Naive thymus-derived CD4-positive, alpha-beta T cell (primary cell): ENCODE measurements at regions of chr4 and their contacts with region 1.

Region 1: DNA sequence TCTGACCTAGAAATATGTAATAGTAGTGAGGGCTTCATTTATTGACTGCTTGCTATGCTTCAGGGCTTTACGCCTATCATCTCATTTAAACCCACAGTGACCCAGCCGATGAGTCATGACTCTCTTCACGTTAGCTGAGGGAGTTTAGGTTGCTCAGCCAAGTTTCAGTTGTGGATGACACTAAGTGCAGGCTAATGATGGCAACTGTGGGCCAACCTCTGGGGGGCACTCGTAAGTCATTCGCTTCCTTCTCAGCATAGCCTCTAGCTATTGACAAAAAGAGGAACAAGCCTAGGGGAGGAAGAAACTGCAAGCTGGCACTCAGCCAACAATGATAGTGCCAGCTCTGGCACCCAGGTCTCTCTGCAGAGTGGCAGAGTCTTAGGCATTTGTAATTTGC is 325.0 kb downstream of the ARHGAP10 start:
- DNase-seq: peak in 6 of 9 donors; percentile 22 to 40 (median 28)
- ATAC-seq: peak; percentile 80
- H3K4me3 ChIP-seq: no peak overlapping the region
- H3K4me3 Mint-ChIP-seq: peak overlapping the region in 9 of 10 donors; percentile 10 to 64 (median 29)
- H3K27ac ChIP-seq: no peak overlapping the region
- H3K27ac Mint-ChIP-seq: peak overlapping the region; percentile 48 to 99 (median 84)
- H3K4me1 ChIP-seq: peaks cover 58 to 64% of the 10 kb centered on the region in 2 donors
- H3K4me1 Mint-ChIP-seq: peaks cover 59 to 98% (median 94%) of the 10 kb centered on the region in 7 donors
- H3K27me3 ChIP-seq: no peaks in the 10 kb centered on the region
- H3K27me3 Mint-ChIP-seq: no peaks in the 10 kb centered on the region

Region 2: GRCh38 chr4:146175541-146176453 is 1881.1 kb before region 1 on chr4 and contains the start of gene LSM6:
- CTCF ChIA-PET with region 1: no interaction called
- POLR2A ChIA-PET with region 1: no interaction called
- intact Hi-C with region 1: loop called in 1 of 2 experiments (anchors 5 kb)
- DNase-seq: peak; percentile 63 to 86 (median 84)
- ATAC-seq: peak; percentile 94
- H3K4me3 ChIP-seq: peak within 1 kb of the TSS; percentile 87
- H3K4me3 Mint-ChIP-seq: peak within 1 kb of the TSS; percentile 88 to 95 (median 92)
- H3K27ac ChIP-seq: peak within 1 kb of the TSS; percentile 94
- H3K27ac Mint-ChIP-seq: peak within 1 kb of the TSS; percentile 82 to 99 (median 97)
- H3K4me1 ChIP-seq: peaks cover 25 to 31% of the 10 kb centered on the region in 2 donors
- H3K4me1 Mint-ChIP-seq: peaks cover 29 to 66% (median 57%) of the 10 kb centered on the region in 7 donors
- H3K27me3 ChIP-seq: no peaks in the 10 kb centered on the region
- H3K27me3 Mint-ChIP-seq: no peaks in the 10 kb centered on the region
- total RNA-seq, gene LSM6: 24.7 to 49.7 (median 46.2) TPM

Region 3: DNA sequence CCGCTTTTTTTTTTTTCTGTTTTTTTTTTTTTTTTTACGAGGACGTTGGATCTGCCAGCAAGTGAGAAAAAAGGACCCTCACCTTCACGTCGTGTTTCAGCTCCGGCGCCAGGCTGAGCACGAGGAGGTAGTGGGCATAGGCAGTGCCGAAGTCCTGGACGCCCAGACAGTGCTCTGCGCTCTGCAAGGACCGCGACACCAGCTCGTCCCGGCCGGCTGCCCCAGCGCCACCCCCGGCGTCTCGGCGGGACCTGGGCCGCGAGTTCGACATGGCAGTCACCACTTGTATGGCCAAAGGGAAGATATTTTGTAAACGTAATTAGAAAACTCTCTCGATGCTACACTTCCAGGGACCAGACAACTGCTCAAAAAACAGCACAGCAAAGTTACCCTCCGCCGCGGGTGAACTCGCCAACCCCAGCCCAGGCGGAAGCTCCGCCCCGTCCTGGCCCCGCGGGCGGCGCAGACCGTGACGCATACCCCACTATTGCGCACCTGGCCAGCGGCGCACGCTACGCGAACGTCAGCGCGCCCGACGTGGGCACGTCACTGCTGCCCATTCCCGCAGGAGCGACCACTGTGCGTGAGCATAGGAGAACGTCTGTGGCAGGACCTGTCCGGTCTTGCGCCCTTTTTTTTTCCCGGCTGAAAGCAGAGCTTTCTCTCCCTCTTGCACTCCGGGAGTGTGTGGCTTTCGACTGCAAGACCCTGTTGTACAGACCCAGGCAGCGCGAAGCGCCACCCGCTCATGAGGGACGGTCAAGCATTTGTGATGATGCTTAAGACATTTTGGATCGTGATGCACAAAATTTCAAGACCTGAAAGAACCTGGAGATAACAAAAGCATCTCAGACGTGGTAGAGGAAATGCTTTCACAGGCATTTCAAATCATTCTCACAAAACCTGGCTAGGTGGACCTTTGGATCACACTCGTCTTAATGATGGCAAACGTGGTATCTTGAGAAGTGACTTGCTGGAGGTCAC is 372.9 kb before region 1 on chr4 and contains the start of gene PRMT9:
- CTCF ChIA-PET with region 1: no interaction called
- POLR2A ChIA-PET with region 1: no interaction called
- intact Hi-C with region 1: loop called in 1 of 2 experiments (anchors 5 kb)
- DNase-seq: peak; percentile 79 to 90 (median 85)
- ATAC-seq: peak; percentile 98
- H3K4me3 ChIP-seq: peak within 1 kb of the TSS; percentile 97
- H3K4me3 Mint-ChIP-seq: peak within 1 kb of the TSS; percentile 89 to 100 (median 97)
- H3K27ac ChIP-seq: peak within 1 kb of the TSS; percentile 95
- H3K27ac Mint-ChIP-seq: peak within 1 kb of the TSS; percentile 86 to 99 (median 97)
- H3K4me1 ChIP-seq: peaks cover 4 to 16% of the 10 kb centered on the region in 2 donors
- H3K4me1 Mint-ChIP-seq: peaks cover 15 to 47% (median 38%) of the 10 kb centered on the region in 7 donors
- H3K27me3 ChIP-seq: no peaks in the 10 kb centered on the region
- H3K27me3 Mint-ChIP-seq: peaks cover 0 to 11% (median 2%) of the 10 kb centered on the region in 5 donors
- total RNA-seq, gene PRMT9: 9.7 to 15.9 (median 10.8) TPM

Region 4: GRCh38 chr4:147831551-147832177 is 225.2 kb before region 1 on chr4:
- CTCF ChIA-PET with region 1: no interaction called
- POLR2A ChIA-PET with region 1: no interaction called
- intact Hi-C with region 1: no loop called
- DNase-seq: no peak
- ATAC-seq: peak; percentile 82
- H3K4me3 ChIP-seq: no peak overlapping the region
- H3K4me3 Mint-ChIP-seq: no peak overlapping the region
- H3K27ac ChIP-seq: no peak overlapping the region
- H3K27ac Mint-ChIP-seq: no peak overlapping the region
- H3K4me1 ChIP-seq: no peaks in the 10 kb centered on the region
- H3K4me1 Mint-ChIP-seq: peaks cover 0 to 4% (median 0%) of the 10 kb centered on the region in 7 donors
- H3K27me3 ChIP-seq: no peaks in the 10 kb centered on the region
- H3K27me3 Mint-ChIP-seq: no peaks in the 10 kb centered on the region

Region 5: DNA sequence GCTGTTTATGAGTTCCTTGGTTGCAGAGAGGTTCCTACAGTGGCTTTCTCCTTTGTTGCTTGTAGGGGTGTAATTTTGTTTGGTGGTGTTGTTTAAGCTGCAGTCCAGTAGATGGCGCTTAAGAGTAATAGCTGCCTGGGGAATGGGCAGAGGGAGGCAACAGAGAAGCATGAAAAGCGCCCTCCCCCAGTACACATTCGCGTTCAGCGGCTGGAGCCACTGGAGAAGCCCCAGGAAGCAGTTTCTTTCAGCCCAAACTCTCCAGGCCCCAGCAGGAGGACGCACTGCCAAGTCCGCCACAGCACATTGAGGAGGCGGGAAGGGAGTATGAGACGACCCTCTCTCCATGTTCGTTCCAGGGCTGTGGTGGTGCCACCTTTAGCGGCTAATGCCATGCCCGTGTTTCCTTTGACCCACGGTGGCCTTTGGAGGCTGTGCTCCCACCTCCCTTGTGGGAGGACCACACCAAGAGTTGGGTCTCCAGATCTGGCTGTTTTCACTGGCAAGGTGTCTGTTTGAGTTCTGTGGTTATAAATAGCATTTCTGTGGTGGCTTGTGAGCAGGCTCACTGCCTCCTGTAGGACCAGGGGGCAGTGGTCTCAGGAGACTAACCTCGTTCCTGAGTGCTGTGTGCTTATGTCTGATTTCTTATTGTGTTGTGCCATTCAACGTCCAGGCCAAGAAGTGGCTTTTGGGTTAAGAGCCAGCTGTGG is 72.6 kb before region 1 on chr4:
- CTCF ChIA-PET with region 1: interaction called, 3 read pairs
- POLR2A ChIA-PET with region 1: no interaction called
- intact Hi-C with region 1: loop called in 1 of 2 experiments (anchors 5 kb)
- DNase-seq: peak in 5 of 9 donors; percentile 7 to 30 (median 9)
- ATAC-seq: peak; percentile 60
- H3K4me3 ChIP-seq: no peak overlapping the region
- H3K4me3 Mint-ChIP-seq: no peak overlapping the region
- H3K27ac ChIP-seq: no peak overlapping the region
- H3K27ac Mint-ChIP-seq: no peak overlapping the region
- H3K4me1 ChIP-seq: peaks cover 0 to 4% of the 10 kb centered on the region in 2 donors
- H3K4me1 Mint-ChIP-seq: peaks cover 0 to 12% (median 0%) of the 10 kb centered on the region in 7 donors
- H3K27me3 ChIP-seq: no peaks in the 10 kb centered on the region
- H3K27me3 Mint-ChIP-seq: no peaks in the 10 kb centered on the region

Region 6: DNA sequence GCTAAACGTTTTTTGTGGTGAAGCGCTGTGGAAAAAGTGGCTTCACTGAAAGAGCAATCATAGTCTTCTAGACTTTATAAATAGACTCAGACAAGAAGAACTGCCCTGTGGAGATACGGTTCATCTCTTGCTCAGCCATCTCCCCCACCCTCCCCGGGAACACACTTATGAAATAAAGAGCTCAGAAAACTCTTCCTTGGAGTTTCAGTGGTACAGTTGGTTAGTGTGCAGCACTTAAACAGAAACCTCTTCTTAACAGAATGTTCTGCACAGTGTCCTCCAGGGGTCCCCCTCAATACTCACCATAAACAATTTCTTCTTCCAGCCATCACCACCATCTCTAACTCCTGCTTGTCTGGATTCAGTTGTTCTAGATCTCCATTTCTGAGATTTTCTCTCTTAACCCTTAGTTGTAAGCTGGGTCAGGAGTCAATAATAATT is 11.9 kb before region 1 on chr4:
- CTCF ChIA-PET with region 1: interaction called, 3 read pairs
- POLR2A ChIA-PET with region 1: interaction called, 8 read pairs
- intact Hi-C with region 1: loop called in 1 of 2 experiments (anchors 2 kb)
- DNase-seq: peak in 5 of 9 donors; percentile 20 to 58 (median 46)
- ATAC-seq: peak; percentile 71
- H3K4me3 ChIP-seq: no peak overlapping the region
- H3K4me3 Mint-ChIP-seq: no peak overlapping the region
- H3K27ac ChIP-seq: no peak overlapping the region
- H3K27ac Mint-ChIP-seq: peak overlapping the region in 2 of 9 donors; percentile 21 to 47
- H3K4me1 ChIP-seq: peaks cover 4% of the 10 kb centered on the region in 2 donors
- H3K4me1 Mint-ChIP-seq: peaks cover 7 to 26% (median 17%) of the 10 kb centered on the region in 7 donors
- H3K27me3 ChIP-seq: no peaks in the 10 kb centered on the region
- H3K27me3 Mint-ChIP-seq: no peaks in the 10 kb centered on the region

Region 7: DNA sequence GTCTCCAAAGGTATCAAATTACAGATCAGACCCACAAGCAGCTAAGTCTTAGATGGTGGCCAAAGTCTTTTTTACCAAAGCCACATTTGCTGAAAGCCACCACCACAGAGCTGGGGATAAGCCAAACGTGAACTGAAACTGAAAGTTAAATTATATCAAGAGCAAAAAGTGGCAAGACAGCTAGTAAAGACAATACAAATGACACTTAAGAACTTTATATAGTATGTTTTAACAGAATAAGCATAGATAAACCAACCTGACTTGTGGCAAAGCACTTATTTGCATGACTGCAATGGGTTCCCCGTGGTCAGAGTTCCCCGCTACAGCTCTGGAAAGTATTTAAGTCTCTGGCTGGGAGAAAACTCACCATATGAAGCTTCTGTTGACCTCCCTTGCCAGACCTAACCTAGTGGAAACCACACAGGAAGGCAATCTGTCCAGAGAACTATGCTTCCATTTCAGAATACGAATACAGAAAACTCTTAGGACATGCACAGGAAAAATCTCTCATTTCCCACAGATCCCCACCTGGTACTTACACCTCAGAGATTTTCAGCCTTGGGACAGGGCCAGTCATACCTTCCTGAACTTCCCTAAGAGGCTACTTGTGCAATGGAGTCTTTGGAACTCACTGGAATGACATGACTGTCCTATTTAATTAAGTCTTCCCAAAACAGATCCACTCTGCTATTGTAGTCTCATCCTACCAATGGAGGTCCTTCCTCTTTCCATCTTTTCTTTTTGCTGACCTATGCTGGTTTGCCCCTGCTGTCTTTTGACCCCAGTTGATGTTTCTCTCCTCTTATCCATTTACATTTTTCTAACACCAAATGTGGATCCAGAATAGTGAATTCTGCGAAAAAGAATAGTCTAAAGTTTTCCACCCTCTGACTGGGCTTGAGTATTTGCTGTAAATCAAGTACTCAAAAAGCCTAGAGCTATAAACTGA is 160.3 kb after region 1 on chr4:
- CTCF ChIA-PET with region 1: no interaction called
- POLR2A ChIA-PET with region 1: no interaction called
- intact Hi-C with region 1: loop called in 1 of 2 experiments (anchors 5 kb)
- DNase-seq: peak in 5 of 9 donors; percentile 11 to 33 (median 25)
- ATAC-seq: peak; percentile 67
- H3K4me3 ChIP-seq: peak overlapping the region; percentile 43
- H3K4me3 Mint-ChIP-seq: peak overlapping the region; percentile 63 to 82 (median 78)
- H3K27ac ChIP-seq: peak overlapping the region; percentile 32
- H3K27ac Mint-ChIP-seq: peak overlapping the region; percentile 41 to 90 (median 57)
- H3K4me1 ChIP-seq: peaks cover 11 to 15% of the 10 kb centered on the region in 2 donors
- H3K4me1 Mint-ChIP-seq: peaks cover 14 to 63% (median 42%) of the 10 kb centered on the region in 7 donors
- H3K27me3 ChIP-seq: no peaks in the 10 kb centered on the region
- H3K27me3 Mint-ChIP-seq: no peaks in the 10 kb centered on the region